GM12878 (cell line): ENCODE measurements at regions of chr10 and their contacts with region 1.

Region 1: GRCh38 chr10:86361156-86362097 is 5.2 kb downstream of the GRID1 start:
- DNase-seq: no peak
- ATAC-seq: no peak
- H3K4me3 ChIP-seq: no peak overlapping the region
- H3K27ac ChIP-seq: no peak overlapping the region
- H3K4me1 ChIP-seq: no peaks in the 10 kb centered on the region
- H3K27me3 ChIP-seq: peaks cover 20 to 32% of the 10 kb centered on the region in 2 experiments
- CTCF ChIP-seq: no peak
- EP300 ChIP-seq: no peak
- POLR2A ChIP-seq: no peak
- RAD21 ChIP-seq: no peak

Region 2: GRCh38 chr10:86127274-86127819 is 234.1 kb before region 1 on chr10:
- CTCF ChIA-PET with region 1: no interaction called
- POLR2A ChIA-PET with region 1: no interaction called
- RAD21 ChIA-PET with region 1: no interaction called
- SMC1A ChIA-PET with region 1: no interaction called
- in situ Hi-C with region 1: no loop called
- intact Hi-C with region 1: no loop called
- DNase-seq: no peak
- ATAC-seq: no peak
- H3K4me3 ChIP-seq: no peak overlapping the region
- H3K27ac ChIP-seq: no peak overlapping the region
- H3K4me1 ChIP-seq: no peaks in the 10 kb centered on the region
- H3K27me3 ChIP-seq: no peaks in the 10 kb centered on the region; a peak in 2 of 4 replicates
- CTCF ChIP-seq: no peak
- EP300 ChIP-seq: no peak
- POLR2A ChIP-seq: no peak
- RAD21 ChIP-seq: no peak

Region 3: GRCh38 chr10:86349474-86349873 is 12.0 kb before region 1 on chr10:
- CTCF ChIA-PET with region 1: interaction called, 17 read pairs
- POLR2A ChIA-PET with region 1: interaction called, 3 read pairs
- RAD21 ChIA-PET with region 1: no interaction called
- SMC1A ChIA-PET with region 1: interaction called, 6 read pairs
- in situ Hi-C with region 1: no loop called
- intact Hi-C with region 1: no loop called
- DNase-seq: no peak
- ATAC-seq: peak; percentile 82
- H3K4me3 ChIP-seq: no peak overlapping the region
- H3K27ac ChIP-seq: no peak overlapping the region
- H3K4me1 ChIP-seq: no peaks in the 10 kb centered on the region
- H3K27me3 ChIP-seq: peaks cover 0 to 2% of the 10 kb centered on the region in 2 experiments; a peak in 1 of 4 replicates
- CTCF ChIP-seq: peak; percentile 49 to 57 (median 55); a peak in 5 of 6 replicates
- EP300 ChIP-seq: no peak
- POLR2A ChIP-seq: no peak
- RAD21 ChIP-seq: peak; percentile 39